Colonic mucosa (tissue), 4 donors: ENCODE measurements at regions of chr13 and their contacts with region 1.

Region 1: GRCh38 chr13:99606324-99607066 is 105.2 kb downstream of the TM9SF2 start:
- DNase-seq: peak; percentile 96
- H3K4me3 ChIP-seq: peak within 1 kb of the TSS; percentile 88
- H3K27ac ChIP-seq: peak within 1 kb of the TSS; percentile 90
- H3K4me1 ChIP-seq: no peaks in the 10 kb centered on the region
- H3K27me3 ChIP-seq: no peaks in the 10 kb centered on the region
- CTCF ChIP-seq: no peak

Region 2: GRCh38 chr13:99498171-99499161 is 108.0 kb before region 1 on chr13:
- intact Hi-C with region 1: loop called (anchors 5 kb)
- DNase-seq: peak; percentile 98
- H3K4me3 ChIP-seq: peak overlapping the region; percentile 43
- H3K27ac ChIP-seq: peak overlapping the region; percentile 97
- H3K4me1 ChIP-seq: peaks cover 11% of the 10 kb centered on the region
- H3K27me3 ChIP-seq: no peaks in the 10 kb centered on the region
- CTCF ChIP-seq: no peak

Region 3: GRCh38 chr13:100828226-100828625 is 1221.7 kb after region 1 on chr13:
- intact Hi-C with region 1: no loop called
- DNase-seq: no peak
- H3K4me3 ChIP-seq: no peak overlapping the region
- H3K27ac ChIP-seq: no peak overlapping the region
- H3K4me1 ChIP-seq: no peaks in the 10 kb centered on the region
- H3K27me3 ChIP-seq: no peaks in the 10 kb centered on the region
- CTCF ChIP-seq: no peak